Mammary epithelial cell (primary cell): ENCODE measurements at regions of chr6 and their contacts with region 1.

Region 1: GRCh38 chr6:35731736-35732532 is 4.9 kb upstream of the ARMC12 start:
- DNase-seq: peak; percentile 87
- H3K4me3 ChIP-seq: peak overlapping the region; percentile 45 to 54 (median 48)
- H3K27ac ChIP-seq: peak overlapping the region; percentile 83
- H3K4me1 ChIP-seq: peaks cover 69% of the 10 kb centered on the region
- H3K27me3 ChIP-seq: no peaks in the 10 kb centered on the region
- CTCF ChIP-seq: no peak

Region 2: GRCh38 chr6:35297601-35298481 is 434.1 kb before region 1 on chr6 and contains the start of gene DEF6:
- CTCF ChIA-PET with region 1: no interaction called
- dilution Hi-C with region 1: no loop called
- in situ Hi-C with region 1: loop called in 1 of 2 experiments (anchors 25 kb)
- intact Hi-C with region 1: loop called (anchors 2 kb)
- DNase-seq: peak; percentile 90
- H3K4me3 ChIP-seq: peak within 1 kb of the TSS; percentile 66 to 85 (median 76)
- H3K27ac ChIP-seq: peak within 1 kb of the TSS; percentile 80
- H3K4me1 ChIP-seq: peaks cover 35% of the 10 kb centered on the region
- H3K27me3 ChIP-seq: no peaks in the 10 kb centered on the region
- CTCF ChIP-seq: peak; percentile 92 to 98
- total RNA-seq, gene DEF6: 12.8 to 32.9 TPM

Region 3: DNA sequence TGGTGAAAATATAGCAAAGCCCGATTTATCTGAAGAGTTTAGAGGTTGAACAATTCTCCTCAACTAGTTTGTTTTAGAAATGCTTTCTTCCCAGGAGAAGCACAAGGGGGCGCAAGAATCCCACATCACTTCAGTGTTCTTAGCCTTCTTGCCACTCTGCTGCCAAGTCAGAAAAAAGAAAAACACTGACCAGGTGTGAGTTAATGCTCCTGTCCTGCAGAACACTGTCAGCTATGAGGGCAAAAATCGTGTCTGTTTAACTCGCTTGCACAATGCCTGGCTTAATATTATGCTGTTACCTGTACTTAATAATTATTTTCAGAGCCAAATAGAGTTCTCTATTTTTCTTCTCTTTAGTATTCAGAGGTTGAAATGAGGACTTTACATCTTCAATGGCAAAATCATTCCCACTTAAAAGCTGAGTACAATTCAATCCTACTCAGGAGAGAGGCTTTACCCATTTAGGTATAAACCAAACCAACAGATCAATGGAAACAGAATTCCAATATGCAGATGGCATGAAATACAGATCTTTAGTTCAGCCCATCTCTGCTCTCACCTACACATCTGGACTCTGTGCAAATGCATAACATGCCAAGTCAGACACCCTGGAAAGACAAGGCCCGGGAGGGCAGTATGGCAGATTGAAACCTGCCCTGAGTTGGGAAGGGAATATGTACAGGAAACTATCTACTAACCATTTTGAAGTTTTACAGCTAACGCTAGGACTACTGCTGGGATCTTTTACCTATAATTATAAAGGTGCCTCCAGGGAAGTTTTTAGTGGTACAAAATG is 147.8 kb before region 1 on chr6:
- CTCF ChIA-PET with region 1: no interaction called
- dilution Hi-C with region 1: no loop called
- in situ Hi-C with region 1: loop called (anchors 5 kb)
- intact Hi-C with region 1: loop called (anchors 1 kb)
- DNase-seq: peak; percentile 65
- H3K4me3 ChIP-seq: no peak overlapping the region
- H3K27ac ChIP-seq: peak overlapping the region; percentile 60
- H3K4me1 ChIP-seq: peaks cover 39% of the 10 kb centered on the region
- H3K27me3 ChIP-seq: no peaks in the 10 kb centered on the region
- CTCF ChIP-seq: peak; percentile 75 to 81

Region 4: GRCh38 chr6:35654883-35655282 is 77.1 kb before region 1 on chr6:
- CTCF ChIA-PET with region 1: no interaction called
- dilution Hi-C with region 1: loop called (anchors 5 kb)
- in situ Hi-C with region 1: no loop called
- intact Hi-C with region 1: no loop called
- DNase-seq: no peak
- H3K4me3 ChIP-seq: no peak overlapping the region
- H3K27ac ChIP-seq: no peak overlapping the region
- H3K4me1 ChIP-seq: no peaks in the 10 kb centered on the region
- H3K27me3 ChIP-seq: no peaks in the 10 kb centered on the region
- CTCF ChIP-seq: no peak

Region 5: DNA sequence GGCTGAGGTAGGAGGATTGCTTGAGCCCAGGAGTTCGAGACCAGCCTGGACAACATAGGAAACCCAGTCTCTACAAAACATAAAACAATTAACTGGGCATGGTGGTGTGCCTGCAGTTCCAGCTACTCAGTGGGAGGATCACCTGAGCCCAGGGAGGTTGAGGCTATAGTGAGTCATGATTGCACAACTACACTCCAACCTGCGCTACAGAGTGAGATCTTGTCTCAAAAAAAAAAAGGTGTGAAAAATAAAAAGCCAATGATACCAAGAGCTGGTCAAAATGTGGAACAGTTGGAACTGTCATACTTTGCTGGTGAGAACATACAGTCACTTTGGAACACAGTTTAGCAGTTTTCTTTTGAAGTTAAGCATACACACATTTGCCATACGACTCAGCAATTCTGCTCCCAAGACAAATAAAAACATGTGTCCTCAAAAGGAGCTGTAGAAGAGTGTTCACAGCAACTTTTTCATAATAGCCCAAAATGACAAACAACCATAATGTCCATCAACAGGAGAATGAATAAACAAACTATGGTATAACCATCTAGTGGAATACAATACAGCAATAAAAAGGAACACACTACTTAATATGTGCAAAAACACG is 21.6 kb before region 1 on chr6:
- CTCF ChIA-PET with region 1: no interaction called
- dilution Hi-C with region 1: no loop called
- in situ Hi-C with region 1: no loop called
- intact Hi-C with region 1: loop called (anchors 2 kb)
- DNase-seq: peak; percentile 84
- H3K4me3 ChIP-seq: no peak overlapping the region
- H3K27ac ChIP-seq: no peak overlapping the region
- H3K4me1 ChIP-seq: peaks cover 9% of the 10 kb centered on the region
- H3K27me3 ChIP-seq: no peaks in the 10 kb centered on the region
- CTCF ChIP-seq: no peak